ENCODE measurements at regions of chr2 and their contacts with region 1.

Region 1: DNA sequence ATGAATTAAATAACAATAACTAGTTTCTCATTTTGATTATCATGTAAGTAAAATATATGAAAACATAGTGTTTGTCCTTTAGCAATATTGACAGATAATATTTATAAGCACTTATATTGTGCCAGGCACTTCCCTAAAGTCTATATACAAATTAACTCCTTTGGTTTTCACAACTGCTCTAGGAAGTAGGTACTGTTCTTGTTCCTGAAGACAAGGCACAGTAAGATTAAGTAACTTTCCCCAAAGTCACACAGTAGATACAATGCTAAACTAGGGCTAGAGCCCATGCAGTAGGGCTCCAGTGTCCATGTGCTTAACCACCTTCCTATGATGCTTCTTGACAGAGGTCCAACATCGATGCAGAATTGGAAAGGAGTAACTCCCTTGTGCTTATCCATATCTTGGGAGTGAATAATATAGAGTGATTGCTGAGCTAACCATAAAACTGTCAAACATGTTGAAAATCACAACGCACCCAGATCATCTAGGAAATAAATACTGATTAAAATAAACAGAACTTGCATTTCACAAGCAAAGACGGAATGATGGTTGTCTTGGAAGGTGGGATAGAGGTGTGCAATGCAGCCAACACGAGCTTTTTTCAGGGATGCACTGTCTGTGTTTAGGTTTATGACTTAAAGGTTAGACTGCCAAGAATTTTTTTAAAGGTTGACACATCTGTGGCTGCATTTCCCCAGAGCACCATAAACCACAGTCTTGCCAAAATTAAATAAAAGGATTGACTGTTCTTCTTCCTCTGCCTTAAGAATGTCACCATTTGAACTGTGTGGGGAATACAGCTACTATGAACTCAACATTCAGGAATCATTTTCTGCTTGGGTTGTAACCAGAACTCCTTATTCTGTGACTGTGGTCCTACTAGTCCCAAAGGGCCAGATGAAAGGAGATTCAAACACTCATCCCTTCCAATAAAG is 80.8 kb downstream of the ANKRD44 start:
- DNase-seq: no peak
- H3K4me3 Mint-ChIP-seq: no peak overlapping the region
- H3K27ac Mint-ChIP-seq: peak overlapping the region; percentile 32
- H3K4me1 Mint-ChIP-seq: peaks cover 77% of the 10 kb centered on the region
- H3K27me3 Mint-ChIP-seq: no peaks in the 10 kb centered on the region

Region 2: GRCh38 chr2:197168705-197169104 is 61.1 kb before region 1 on chr2:
- intact Hi-C with region 1: no loop called
- DNase-seq: peak; percentile 35
- H3K4me3 Mint-ChIP-seq: no peak overlapping the region
- H3K27ac Mint-ChIP-seq: peak overlapping the region; percentile 13
- H3K4me1 Mint-ChIP-seq: peaks cover 44% of the 10 kb centered on the region
- H3K27me3 Mint-ChIP-seq: no peaks in the 10 kb centered on the region

Region 3: GRCh38 chr2:197216361-197216979 is 13.3 kb before region 1 on chr2:
- intact Hi-C with region 1: loop called (anchors 1 kb)
- DNase-seq: no peak
- H3K4me3 Mint-ChIP-seq: peak overlapping the region; percentile 80
- H3K27ac Mint-ChIP-seq: peak overlapping the region; percentile 94
- H3K4me1 Mint-ChIP-seq: peaks cover 83% of the 10 kb centered on the region
- H3K27me3 Mint-ChIP-seq: no peaks in the 10 kb centered on the region